ENCODE measurements at regions of chr12 and their contacts with region 1.

Region 1: DNA sequence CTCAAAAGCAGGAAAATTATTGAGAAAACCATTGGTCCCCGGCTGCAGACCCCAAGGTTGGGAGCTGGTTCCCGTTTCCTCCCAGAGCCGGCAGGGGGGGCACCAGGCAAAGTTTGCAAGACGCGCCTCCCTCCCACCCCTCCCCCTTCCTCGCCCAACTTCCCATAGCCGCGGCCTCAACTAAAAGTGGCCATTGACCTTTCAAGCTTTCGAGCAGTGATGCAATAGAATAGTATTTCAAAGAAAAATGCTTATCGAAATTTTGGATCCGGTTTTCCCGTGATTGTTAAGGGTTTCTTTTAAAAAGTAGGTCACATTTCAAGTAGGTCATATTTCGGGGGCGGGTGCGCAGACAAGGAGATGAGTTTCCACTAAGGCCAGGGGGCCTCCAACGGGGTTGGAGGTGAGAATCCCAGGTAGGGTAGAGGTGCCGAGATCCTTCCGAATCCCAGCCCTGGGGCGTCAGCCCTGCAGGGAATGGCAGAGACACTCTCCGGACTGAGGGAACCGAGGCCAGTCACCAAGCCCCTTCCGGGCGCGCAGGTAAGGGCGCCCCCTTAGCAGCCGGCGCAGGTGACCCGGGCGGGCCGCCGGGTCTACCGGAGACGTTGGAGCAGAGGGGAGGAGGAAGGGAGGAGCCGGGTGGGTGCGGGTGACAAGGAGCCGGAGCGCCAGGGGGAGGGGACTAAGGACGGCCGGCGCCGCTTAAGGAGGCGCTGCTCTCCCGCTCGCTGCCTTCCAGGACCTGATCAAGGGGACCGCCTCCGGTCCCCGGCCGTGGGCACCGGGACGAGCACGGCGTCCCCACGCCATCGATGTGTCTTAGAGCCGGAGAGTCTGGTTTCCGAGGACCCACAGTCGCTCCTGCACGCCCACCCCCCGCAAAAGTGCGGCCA is 2.6 kb upstream of the SOCS2 start:
- DNase-seq: peak; percentile 34 to 76 (median 66)
- ATAC-seq: peak; percentile 58
- H3K4me3 ChIP-seq: peak overlapping the region; percentile 89
- H3K4me3 Mint-ChIP-seq: peak overlapping the region; percentile 88 to 98 (median 93)
- H3K27ac ChIP-seq: peak overlapping the region; percentile 78
- H3K27ac Mint-ChIP-seq: peak overlapping the region; percentile 70 to 91 (median 84)
- H3K4me1 ChIP-seq: peaks cover 14 to 16% of the 10 kb centered on the region in 2 donors
- H3K4me1 Mint-ChIP-seq: peaks cover 24 to 37% (median 30%) of the 10 kb centered on the region in 7 donors
- H3K27me3 ChIP-seq: no peaks in the 10 kb centered on the region
- H3K27me3 Mint-ChIP-seq: peaks cover 0 to 15% (median 0%) of the 10 kb centered on the region in 5 donors

Region 2: GRCh38 chr12:92987362-92987761 is 582.5 kb before region 1 on chr12:
- CTCF ChIA-PET with region 1: interaction called, 5 read pairs
- POLR2A ChIA-PET with region 1: no interaction called
- intact Hi-C with region 1: loop called (anchors 5 to 10 kb)
- DNase-seq: peak in 7 of 9 donors; percentile 41 to 66 (median 56)
- ATAC-seq: peak; percentile 81
- H3K4me3 ChIP-seq: no peak overlapping the region
- H3K4me3 Mint-ChIP-seq: peak overlapping the region in 9 of 10 donors; percentile 18 to 80 (median 65)
- H3K27ac ChIP-seq: no peak overlapping the region
- H3K27ac Mint-ChIP-seq: peak overlapping the region in 5 of 9 donors; percentile 35 to 68 (median 59)
- H3K4me1 ChIP-seq: peaks cover 0 to 8% of the 10 kb centered on the region in 2 donors
- H3K4me1 Mint-ChIP-seq: peaks cover 5 to 13% (median 12%) of the 10 kb centered on the region in 7 donors
- H3K27me3 ChIP-seq: no peaks in the 10 kb centered on the region
- H3K27me3 Mint-ChIP-seq: peaks cover 0 to 5% (median 0%) of the 10 kb centered on the region in 5 donors

Region 3: DNA sequence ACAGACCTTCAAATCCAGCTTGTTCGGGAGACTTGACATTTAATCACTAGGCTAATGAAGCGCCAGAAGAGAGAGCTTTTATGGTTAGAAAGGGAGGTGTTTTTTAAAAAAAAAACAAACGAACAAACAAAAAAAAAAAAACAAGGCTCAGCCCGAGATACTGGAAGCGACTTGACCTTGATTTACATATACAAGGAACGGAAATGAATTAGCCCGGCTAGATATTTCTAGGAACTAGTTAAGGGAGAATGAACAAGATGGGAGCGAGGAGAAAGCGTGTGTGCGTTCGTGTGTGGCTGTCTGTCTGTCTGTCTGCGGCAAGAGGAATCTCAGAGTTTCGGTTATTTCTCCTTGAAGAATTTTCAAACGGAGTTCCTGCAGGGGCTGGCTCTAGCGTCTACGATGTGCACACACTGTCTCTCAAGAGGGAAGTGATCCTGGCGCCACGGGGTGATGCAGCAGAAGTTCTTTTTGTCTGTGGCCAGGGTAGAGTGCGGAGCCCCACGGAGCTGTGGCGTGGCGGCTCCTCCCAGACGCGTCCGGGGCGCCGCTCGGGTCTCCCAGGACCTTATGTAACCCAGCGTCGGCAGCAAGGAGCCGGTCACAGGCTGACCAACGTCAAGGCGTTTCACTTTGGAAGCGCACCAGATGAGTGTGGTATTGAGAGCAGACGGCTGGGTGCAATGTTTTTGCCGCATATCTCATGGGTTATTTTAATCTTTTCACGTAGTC is 21.4 kb after region 1 on chr12:
- CTCF ChIA-PET with region 1: interaction called, 3 read pairs
- POLR2A ChIA-PET with region 1: interaction called, 3 read pairs
- intact Hi-C with region 1: loop called (anchors 1 kb)
- DNase-seq: peak in 8 of 9 donors; percentile 13 to 41 (median 25)
- ATAC-seq: peak; percentile 95
- H3K4me3 ChIP-seq: peak overlapping the region; percentile 61
- H3K4me3 Mint-ChIP-seq: peak overlapping the region; percentile 78 to 93 (median 87)
- H3K27ac ChIP-seq: no peak overlapping the region
- H3K27ac Mint-ChIP-seq: peak overlapping the region in 1 of 9 donors; percentile 75
- H3K4me1 ChIP-seq: peaks cover 0 to 6% of the 10 kb centered on the region in 2 donors
- H3K4me1 Mint-ChIP-seq: peaks cover 14 to 42% (median 17%) of the 10 kb centered on the region in 7 donors
- H3K27me3 ChIP-seq: peaks cover 17 to 29% of the 10 kb centered on the region in 2 donors
- H3K27me3 Mint-ChIP-seq: peaks cover 42 to 58% (median 54%) of the 10 kb centered on the region in 5 donors

Region 4: DNA sequence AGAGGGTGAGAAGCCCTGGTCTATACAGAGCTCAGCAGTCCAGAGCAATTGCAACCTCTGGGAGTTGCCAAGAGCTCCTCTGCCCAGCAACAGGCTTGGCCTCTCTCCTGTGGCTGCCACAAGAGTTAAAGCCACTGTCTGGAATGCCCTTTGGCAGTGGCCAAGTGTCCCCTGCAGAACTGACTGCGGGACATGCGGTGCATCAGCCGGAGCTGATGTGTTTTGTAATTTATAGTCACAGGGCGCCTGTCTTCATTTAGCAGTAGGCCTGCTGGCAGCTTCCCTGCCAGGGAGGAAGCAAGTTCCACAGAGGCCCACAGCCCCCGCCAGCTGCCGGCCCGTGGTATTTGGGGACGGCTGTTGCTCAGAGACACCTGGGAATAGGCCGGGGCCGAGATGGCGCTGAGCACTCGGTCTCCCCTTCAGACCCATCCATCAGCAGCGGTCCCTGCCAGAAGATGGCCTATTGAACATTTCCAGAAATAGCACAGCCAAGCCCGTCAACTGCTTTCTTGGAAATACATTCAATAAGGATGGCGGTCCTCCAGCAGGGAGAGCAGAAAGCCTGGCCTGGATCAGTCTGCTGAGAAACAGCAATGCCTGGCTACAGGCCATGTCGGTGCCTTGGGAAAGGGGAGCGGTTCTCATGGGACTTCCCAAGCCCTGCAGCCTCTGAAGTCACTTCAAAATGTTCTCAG is 324.6 kb after region 1 on chr12:
- CTCF ChIA-PET with region 1: no interaction called
- POLR2A ChIA-PET with region 1: no interaction called
- intact Hi-C with region 1: loop called in 1 of 2 experiments (anchors 1 kb)
- DNase-seq: no peak
- ATAC-seq: peak; percentile 31
- H3K4me3 ChIP-seq: no peak overlapping the region
- H3K4me3 Mint-ChIP-seq: no peak overlapping the region
- H3K27ac ChIP-seq: no peak overlapping the region
- H3K27ac Mint-ChIP-seq: peak overlapping the region in 3 of 9 donors; percentile 3 to 58 (median 52)
- H3K4me1 ChIP-seq: peaks cover 0 to 13% of the 10 kb centered on the region in 2 donors
- H3K4me1 Mint-ChIP-seq: peaks cover 11 to 60% (median 33%) of the 10 kb centered on the region in 7 donors
- H3K27me3 ChIP-seq: no peaks in the 10 kb centered on the region
- H3K27me3 Mint-ChIP-seq: no peaks in the 10 kb centered on the region

Region 5: GRCh38 chr12:94149119-94149780 is 579.3 kb after region 1 on chr12:
- CTCF ChIA-PET with region 1: no interaction called
- POLR2A ChIA-PET with region 1: no interaction called
- intact Hi-C with region 1: loop called in 1 of 2 experiments (anchors 1 kb)
- DNase-seq: peak; percentile 23 to 70 (median 45)
- ATAC-seq: peak; percentile 51
- H3K4me3 ChIP-seq: peak overlapping the region; percentile 75
- H3K4me3 Mint-ChIP-seq: peak overlapping the region; percentile 76 to 97 (median 93)
- H3K27ac ChIP-seq: peak overlapping the region; percentile 17
- H3K27ac Mint-ChIP-seq: peak overlapping the region in 3 of 9 donors; percentile 51 to 67 (median 63)
- H3K4me1 ChIP-seq: peaks cover 0 to 17% of the 10 kb centered on the region in 2 donors
- H3K4me1 Mint-ChIP-seq: peaks cover 18 to 53% (median 39%) of the 10 kb centered on the region in 7 donors
- H3K27me3 ChIP-seq: no peaks in the 10 kb centered on the region
- H3K27me3 Mint-ChIP-seq: peaks cover 0 to 31% (median 0%) of the 10 kb centered on the region in 5 donors

Region 6: DNA sequence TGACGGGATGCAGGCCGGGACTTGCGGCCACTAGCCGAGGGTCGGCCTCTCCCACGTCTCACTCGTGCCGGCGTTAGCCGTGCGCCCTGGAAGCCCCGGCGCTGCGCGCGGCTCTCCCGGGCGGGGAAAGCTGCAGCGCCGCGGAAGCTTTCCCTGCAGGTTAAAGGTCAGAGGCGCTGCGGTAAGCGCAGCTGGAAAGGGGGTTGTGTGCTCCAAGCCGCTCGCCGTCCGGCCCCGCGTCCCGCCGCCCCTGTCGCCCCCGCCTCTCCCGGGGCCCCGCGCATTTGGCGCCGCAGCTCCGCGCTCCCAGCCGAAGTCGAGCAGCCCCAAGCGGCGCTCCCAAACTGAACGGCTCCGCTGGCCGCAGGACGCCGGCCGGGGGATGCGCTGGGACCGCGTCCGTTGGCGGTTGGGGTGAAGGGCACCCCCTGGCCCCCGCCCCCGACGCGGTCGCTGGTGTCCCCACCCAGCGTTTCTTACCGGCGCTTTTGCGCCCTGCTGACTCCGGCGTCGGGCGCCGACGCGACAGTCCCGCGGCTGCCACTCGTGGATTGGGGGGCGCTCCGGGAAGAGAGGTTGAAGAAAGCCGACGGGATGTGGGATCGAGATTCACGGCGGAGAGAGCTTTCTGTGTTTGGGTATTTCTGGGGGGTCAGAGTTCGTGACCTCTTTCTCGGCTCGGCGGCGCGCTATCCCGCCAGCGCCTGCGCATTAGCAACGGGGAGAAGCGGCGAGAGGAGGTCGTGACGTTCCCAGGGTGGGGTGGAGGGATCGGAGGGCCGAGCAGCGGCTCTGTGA is 1503.2 kb after region 1 on chr12 and contains the start of gene NR2C1:
- CTCF ChIA-PET with region 1: no interaction called
- POLR2A ChIA-PET with region 1: no interaction called
- intact Hi-C with region 1: loop called in 1 of 2 experiments (anchors 5 kb)
- DNase-seq: peak; percentile 76 to 95 (median 92)
- ATAC-seq: peak; percentile 98
- H3K4me3 ChIP-seq: peak within 1 kb of the TSS; percentile 81
- H3K4me3 Mint-ChIP-seq: peak within 1 kb of the TSS; percentile 92 to 98 (median 94)
- H3K27ac ChIP-seq: peak within 1 kb of the TSS; percentile 81
- H3K27ac Mint-ChIP-seq: peak within 1 kb of the TSS; percentile 84 to 96 (median 93)
- H3K4me1 ChIP-seq: peaks cover 0 to 9% of the 10 kb centered on the region in 2 donors
- H3K4me1 Mint-ChIP-seq: peaks cover 8 to 40% (median 30%) of the 10 kb centered on the region in 7 donors
- H3K27me3 ChIP-seq: no peaks in the 10 kb centered on the region
- H3K27me3 Mint-ChIP-seq: peaks cover 0 to 5% (median 0%) of the 10 kb centered on the region in 5 donors
- total RNA-seq, gene NR2C1: 30.5 to 66.8 (median 58.7) TPM